Aorta (tissue), 5 donors: ENCODE measurements at regions of chr10 and their contacts with region 1.

Region 1: DNA sequence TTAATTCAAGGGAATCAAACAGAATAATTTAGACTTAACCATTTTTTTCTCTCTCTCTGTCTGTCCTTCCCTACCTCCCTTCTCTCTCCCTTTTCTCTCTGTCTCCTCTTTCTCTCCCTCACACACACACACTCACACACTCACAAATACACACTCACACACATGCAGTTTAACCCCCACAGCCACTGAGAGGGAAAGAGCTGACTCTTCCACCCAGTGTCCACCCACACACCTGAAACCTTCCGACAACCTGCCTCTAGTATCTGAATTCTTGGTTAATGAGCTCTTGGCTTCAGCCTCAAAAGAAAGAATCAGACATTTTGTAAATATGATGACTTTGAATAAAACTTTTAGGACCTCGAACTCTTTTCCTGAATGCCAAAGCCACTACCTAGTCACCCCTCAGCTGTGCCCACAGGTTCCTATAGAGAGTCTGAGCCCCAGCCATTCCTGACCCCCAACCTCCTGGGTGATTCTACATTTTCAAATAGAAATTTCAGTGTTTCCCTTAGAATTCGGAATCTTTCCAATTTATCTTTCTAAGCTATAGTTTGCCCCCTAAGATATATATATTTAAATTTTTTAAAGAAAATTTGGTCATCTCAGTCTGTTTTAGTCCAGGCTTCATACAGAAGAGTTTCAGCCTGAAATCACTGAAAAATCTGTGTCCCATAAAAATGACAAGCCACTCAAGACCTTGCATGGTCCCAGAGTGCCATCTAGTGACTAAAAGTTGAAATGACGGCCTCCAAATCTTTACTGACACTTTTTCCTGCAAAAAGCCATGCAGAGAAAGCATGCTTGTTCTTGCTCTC is 202.8 kb downstream of the IPMK start:
- DNase-seq: no peak
- ATAC-seq: no peak
- H3K4me3 ChIP-seq: no peak overlapping the region
- H3K27ac ChIP-seq: no peak overlapping the region
- H3K4me1 ChIP-seq: no peaks in the 10 kb centered on the region
- H3K27me3 ChIP-seq: no peaks in the 10 kb centered on the region

Region 2: GRCh38 chr10:57723305-57723704 is 341.6 kb before region 1 on chr10:
- intact Hi-C with region 1: loop called in 1 of 2 experiments (anchors 5 kb)
- DNase-seq: no peak
- ATAC-seq: no peak
- H3K4me3 ChIP-seq: no peak overlapping the region
- H3K27ac ChIP-seq: no peak overlapping the region
- H3K4me1 ChIP-seq: no peaks in the 10 kb centered on the region
- H3K27me3 ChIP-seq: no peaks in the 10 kb centered on the region

Region 3: DNA sequence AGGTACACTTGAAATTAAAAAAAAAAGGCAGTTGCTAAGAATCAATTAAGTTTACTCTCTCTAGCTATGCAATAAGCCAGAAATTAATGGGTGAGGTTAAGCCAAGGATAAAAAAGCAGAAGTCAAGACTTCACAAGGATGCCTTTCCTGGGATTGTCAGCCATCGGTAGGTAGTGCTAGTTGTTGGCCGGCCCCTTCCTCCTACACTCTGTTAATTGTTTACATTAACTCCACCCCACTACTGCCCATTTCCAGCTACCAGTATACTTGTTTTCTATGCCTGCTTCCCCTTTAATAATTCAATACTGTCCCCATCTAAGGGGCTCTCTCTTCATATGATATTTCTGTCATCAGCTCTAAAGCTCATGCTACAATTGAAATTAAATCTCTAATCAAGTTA is 258.2 kb before region 1 on chr10:
- intact Hi-C with region 1: no loop called
- DNase-seq: no peak
- ATAC-seq: no peak
- H3K4me3 ChIP-seq: no peak overlapping the region
- H3K27ac ChIP-seq: no peak overlapping the region
- H3K4me1 ChIP-seq: no peaks in the 10 kb centered on the region
- H3K27me3 ChIP-seq: no peaks in the 10 kb centered on the region